Activated CD4-positive, alpha-beta T cell treated with anti-CD3 and anti-CD28 coated beads, Interleukin-2, amount 10 ng/mL, durations not matched to agents 24 days and 14 days (primary cell): ENCODE measurements at regions of chr7 and their contacts with region 1.

Region 1: DNA sequence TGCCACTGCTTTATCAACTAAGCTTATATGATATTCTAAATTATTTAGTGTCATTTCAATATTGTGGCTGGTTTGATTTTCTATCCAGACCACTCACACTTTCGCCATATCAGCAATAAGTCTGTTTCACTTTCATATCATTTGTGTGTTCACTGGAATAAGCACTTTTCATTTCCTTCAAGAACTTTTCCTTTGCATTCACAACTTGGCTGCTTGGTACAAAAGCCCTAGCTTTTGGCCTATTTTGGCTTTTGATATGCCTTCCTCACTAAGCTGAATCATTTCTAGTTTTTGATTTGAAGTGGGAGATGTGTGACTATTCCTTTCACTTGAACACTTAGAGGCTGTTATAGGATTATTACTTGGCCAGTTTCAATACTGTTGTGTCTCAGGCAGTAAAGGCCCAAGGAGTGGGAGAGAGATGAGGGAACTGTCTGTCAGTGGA is 120.9 kb upstream of the NAMPT start:
- DNase-seq: no peak
- H3K4me3 Mint-ChIP-seq: peak overlapping the region; percentile 16
- H3K27ac Mint-ChIP-seq: peak overlapping the region; percentile 49
- H3K4me1 Mint-ChIP-seq: peaks cover 18% of the 10 kb centered on the region
- H3K27me3 Mint-ChIP-seq: peaks cover 3% of the 10 kb centered on the region

Region 2: GRCh38 chr7:106285051-106285854 is 120.5 kb before region 1 on chr7:
- intact Hi-C with region 1: loop called (anchors 1 kb)
- DNase-seq: peak; percentile 99
- H3K4me3 Mint-ChIP-seq: peak overlapping the region; percentile 93
- H3K27ac Mint-ChIP-seq: peak overlapping the region; percentile 99
- H3K4me1 Mint-ChIP-seq: peaks cover 32% of the 10 kb centered on the region
- H3K27me3 Mint-ChIP-seq: no peaks in the 10 kb centered on the region

Region 3: GRCh38 chr7:106384371-106384770 is 21.3 kb before region 1 on chr7:
- intact Hi-C with region 1: loop called (anchors 2 kb)
- DNase-seq: no peak
- H3K4me3 Mint-ChIP-seq: no peak overlapping the region
- H3K27ac Mint-ChIP-seq: no peak overlapping the region
- H3K4me1 Mint-ChIP-seq: peaks cover 9% of the 10 kb centered on the region
- H3K27me3 Mint-ChIP-seq: peaks cover 2% of the 10 kb centered on the region

Region 4: GRCh38 chr7:106394526-106394925 is 11.2 kb before region 1 on chr7:
- intact Hi-C with region 1: no loop called
- DNase-seq: no peak
- H3K4me3 Mint-ChIP-seq: no peak overlapping the region
- H3K27ac Mint-ChIP-seq: no peak overlapping the region
- H3K4me1 Mint-ChIP-seq: no peaks in the 10 kb centered on the region
- H3K27me3 Mint-ChIP-seq: peaks cover 18% of the 10 kb centered on the region

Region 5: DNA sequence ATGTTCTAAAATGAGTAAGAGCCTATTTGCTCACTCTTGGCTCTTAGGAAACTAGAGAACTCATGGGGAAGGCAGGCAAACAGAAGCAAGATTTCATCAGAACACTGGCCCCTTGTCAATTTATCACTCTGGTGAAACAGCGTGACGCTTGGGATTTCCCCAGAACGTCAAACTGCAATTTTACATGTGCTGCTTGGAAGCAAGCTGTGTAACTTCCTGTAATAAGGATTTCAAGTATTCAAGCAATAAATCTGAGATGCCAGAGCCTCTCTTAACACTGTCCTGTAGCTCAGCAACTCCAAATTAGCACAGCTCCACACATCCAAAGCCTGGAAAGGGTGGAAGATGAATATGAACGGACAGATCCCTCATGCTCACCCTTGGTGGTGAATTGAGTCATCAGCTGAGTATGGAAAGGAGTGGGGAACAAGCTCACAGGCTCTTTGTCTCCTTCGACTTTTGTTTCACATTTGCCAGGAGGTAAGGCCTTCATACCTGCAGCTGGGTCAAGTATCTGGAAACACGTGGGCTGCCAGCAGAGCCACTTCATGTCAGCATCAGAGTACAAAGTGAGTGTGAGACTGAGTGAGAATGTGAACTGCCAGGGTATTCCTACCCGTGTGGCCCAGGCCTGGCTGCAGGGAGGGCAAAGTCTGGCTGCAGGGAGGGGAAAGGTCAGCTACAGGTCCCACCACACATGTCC is 19.4 kb after region 1 on chr7:
- intact Hi-C with region 1: loop called (anchors 1 kb)
- DNase-seq: peak; percentile 88
- H3K4me3 Mint-ChIP-seq: peak overlapping the region; percentile 74
- H3K27ac Mint-ChIP-seq: peak overlapping the region; percentile 96
- H3K4me1 Mint-ChIP-seq: peaks cover 74% of the 10 kb centered on the region
- H3K27me3 Mint-ChIP-seq: no peaks in the 10 kb centered on the region

Region 6: DNA sequence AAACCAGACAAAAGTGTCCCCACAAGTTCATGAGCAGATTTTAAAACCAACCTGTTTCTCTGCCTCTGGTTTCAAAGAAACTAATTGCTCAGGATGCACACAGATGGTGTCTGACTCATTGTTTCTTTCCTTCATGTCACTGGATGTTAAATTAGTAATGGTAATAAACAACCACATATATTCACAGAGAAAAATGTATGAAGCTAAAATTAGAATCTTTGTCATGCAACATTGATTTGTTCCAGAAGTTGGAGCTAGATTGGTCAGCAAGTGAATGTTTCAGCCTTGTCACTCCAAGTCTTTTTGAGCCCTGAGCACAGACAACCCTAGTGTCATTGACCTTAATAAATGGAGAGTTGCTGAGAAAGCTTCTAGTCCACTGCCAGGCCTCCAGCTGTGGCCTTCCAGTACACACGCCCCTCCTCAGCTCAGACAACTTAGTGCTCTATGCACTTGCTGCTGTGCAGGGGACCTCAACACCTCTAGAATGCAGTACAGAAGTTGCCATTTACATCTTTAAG is 79.4 kb after region 1 on chr7:
- intact Hi-C with region 1: loop called (anchors 1 kb)
- DNase-seq: peak; percentile 55
- H3K4me3 Mint-ChIP-seq: peak overlapping the region; percentile 11
- H3K27ac Mint-ChIP-seq: peak overlapping the region; percentile 82
- H3K4me1 Mint-ChIP-seq: peaks cover 43% of the 10 kb centered on the region
- H3K27me3 Mint-ChIP-seq: no peaks in the 10 kb centered on the region

Region 7: GRCh38 chr7:106774768-106775551 is 369.2 kb after region 1 on chr7:
- intact Hi-C with region 1: loop called (anchors 2 kb)
- DNase-seq: no peak
- H3K4me3 Mint-ChIP-seq: no peak overlapping the region
- H3K27ac Mint-ChIP-seq: peak overlapping the region; percentile 45
- H3K4me1 Mint-ChIP-seq: peaks cover 28% of the 10 kb centered on the region
- H3K27me3 Mint-ChIP-seq: no peaks in the 10 kb centered on the region